Activated CD4-positive, alpha-beta memory T cell treated with anti-CD3 and anti-CD28 coated beads, Interleukin-2, amount 10 ng/mL, durations not matched to agents 7 days and 5 days (primary cell): ENCODE measurements at regions of chr17 and their contacts with region 1.

Region 1: DNA sequence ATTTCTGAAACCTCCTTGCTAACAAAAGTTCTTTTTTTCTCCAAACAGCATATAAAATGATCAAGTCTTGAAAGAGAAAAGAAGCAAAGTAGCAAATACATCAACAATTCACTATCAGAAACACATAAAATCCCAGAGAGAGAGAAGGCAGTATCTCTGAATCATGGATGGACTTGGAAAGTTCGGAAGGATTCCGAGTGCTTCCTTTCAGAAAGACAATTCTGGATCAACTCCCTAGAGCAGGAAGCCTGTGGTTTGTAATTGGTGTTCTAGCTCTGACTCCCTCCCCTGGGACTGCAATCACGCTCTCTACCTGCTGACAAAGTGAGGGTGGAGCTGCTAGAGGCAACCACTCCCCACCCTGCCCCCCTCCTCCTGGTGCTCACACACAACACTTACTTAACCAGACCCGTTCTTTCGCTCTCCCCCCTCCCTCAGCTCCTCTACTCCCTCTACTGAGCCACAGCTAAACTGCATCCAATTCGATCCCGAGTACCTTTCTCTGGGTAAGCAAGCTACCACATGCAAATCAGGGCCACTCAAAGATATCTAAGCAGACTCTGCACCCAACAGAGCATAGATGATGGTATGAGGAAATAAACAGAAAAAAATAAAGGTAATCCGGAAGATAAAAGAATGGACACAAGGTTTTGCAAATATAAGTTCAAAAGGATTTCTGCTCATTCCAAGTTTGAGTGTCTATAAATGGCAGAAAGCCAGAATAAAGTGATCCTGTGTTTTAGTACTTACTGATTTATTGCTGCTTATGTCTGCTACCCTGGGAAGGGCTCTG is at the start of gene RNF43:
- DNase-seq: peak; percentile 86
- H3K4me3 Mint-ChIP-seq: peak within 1 kb of the TSS; percentile 8
- H3K27ac Mint-ChIP-seq: peak within 1 kb of the TSS; percentile 10
- H3K4me1 Mint-ChIP-seq: peaks cover 31% of the 10 kb centered on the region
- H3K27me3 Mint-ChIP-seq: no peaks in the 10 kb centered on the region
- total RNA-seq, gene RNF43: not detected

Region 2: DNA sequence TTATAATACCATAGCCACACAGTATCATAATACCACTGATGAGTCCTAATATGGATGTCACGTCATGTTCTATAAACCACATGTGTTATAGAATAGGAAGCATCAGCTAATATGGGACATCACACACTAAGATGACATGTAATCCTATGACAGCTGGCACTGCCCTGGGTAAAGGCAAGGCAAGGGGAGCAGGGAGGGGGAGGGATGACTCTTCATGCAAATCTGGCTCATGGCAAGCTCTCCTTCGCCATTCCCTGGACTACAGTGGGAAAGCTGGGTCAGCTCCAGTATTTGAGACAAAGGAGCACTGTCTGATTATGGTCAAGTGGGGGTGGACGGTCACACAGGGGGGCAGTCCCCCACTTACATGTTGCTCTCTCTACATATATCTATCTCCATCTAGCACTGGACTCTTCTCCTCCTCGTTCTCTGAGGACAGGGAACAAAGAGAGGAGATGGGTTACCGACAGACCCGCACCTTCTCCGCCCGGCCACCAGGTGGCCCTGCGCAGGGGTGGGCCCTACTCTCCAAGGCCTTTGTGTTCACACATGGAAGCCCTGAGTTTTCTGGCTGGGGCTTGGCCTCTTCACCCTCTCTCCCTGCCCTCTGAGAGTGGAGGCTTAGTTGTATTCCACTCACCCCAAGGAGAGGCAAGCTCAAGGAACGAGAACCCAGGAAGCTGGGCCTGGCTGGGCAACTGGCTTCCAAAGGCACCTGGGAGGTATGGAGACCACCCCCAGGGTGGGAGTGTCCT is 113.3 kb before region 1 on chr17:
- CTCF ChIA-PET with region 1: interaction called, 16 read pairs
- POLR2A ChIA-PET with region 1: interaction called, 8 read pairs
- DNase-seq: peak; percentile 69
- H3K4me3 Mint-ChIP-seq: no peak overlapping the region
- H3K27ac Mint-ChIP-seq: no peak overlapping the region
- H3K4me1 Mint-ChIP-seq: no peaks in the 10 kb centered on the region
- H3K27me3 Mint-ChIP-seq: peaks cover 4% of the 10 kb centered on the region

Region 3: DNA sequence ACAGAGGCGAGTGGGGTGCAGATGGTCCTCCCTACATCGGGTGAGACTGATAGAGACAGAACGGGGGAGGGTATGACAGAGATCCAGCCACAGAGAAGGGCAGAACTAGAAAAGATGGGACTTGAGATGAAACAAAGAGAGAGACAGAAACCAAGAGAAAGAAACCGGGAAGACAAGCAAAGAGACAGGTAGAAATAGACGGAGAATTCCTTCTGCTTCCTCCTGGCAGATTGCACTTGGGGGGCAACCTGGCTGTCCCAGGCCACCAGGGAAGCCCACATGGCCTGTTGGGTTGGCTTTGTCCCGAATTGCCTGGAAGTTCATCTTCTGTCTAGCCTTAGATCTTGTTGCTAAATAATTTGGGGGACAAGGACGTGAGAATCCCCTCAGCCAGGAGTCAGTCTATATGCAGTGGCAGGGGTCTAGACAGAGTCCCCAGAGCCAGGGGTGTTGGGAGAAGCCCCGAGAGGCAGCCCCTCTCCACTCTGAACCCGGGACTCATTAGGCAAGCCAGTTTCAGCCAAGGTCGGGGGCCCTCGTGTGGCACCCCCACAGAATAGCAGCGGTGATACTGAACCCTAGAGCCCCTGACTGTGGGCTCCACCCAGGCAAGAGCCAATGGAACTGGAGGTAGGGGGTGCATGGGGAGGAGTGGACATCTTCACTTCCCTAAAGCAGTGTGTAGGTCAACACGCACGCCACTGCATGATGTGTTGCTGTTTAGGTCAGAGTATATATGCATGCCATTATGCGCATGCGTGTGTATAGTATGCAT is 88.3 kb before region 1 on chr17:
- CTCF ChIA-PET with region 1: interaction called, 7 read pairs
- POLR2A ChIA-PET with region 1: interaction called, 22 read pairs
- DNase-seq: peak; percentile 85
- H3K4me3 Mint-ChIP-seq: peak overlapping the region; percentile 98
- H3K27ac Mint-ChIP-seq: peak overlapping the region; percentile 99
- H3K4me1 Mint-ChIP-seq: peaks cover 37% of the 10 kb centered on the region
- H3K27me3 Mint-ChIP-seq: peaks cover 2% of the 10 kb centered on the region

Region 4: DNA sequence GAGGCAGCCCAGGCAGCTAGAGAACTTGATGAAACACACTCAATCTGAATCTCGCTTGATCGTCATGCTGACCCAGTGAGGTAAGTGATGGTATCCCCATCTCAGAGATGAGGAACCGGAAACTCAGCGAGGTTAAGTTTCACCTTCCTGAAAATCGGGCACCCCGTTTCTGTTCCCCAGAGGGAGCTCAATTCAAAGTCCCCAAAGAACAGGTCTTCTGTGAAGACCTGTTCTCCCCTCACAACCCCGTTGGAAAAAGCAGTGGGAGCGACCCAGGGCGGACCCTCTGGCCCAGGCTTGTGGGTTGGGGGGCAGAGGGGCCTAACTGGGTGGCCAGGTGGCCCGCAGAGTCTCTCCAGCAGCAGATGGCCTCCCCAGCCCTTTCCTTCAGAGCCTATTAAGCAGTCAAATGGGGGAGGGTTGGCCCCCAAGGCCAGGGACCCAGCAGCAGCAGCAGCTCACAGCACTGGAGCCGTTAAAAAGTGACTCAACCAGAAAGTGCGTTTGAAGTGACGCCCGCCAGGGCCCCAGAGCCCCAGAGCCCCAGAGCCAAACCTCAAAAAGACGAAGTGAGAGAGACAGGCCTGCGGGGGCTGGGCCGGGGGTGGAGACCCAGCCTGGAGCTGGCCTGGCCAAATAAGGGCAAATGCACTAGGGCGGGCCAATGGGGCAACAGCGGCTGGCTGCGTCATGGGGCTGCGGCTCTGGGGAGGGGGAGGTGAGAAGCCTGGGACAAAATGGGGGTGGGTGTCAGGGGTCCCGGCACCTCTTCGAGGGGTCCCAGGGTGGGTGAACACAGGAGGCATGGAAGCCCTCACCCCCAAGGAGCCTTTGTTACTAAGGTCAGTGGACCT is 79.7 kb before region 1 on chr17:
- CTCF ChIA-PET with region 1: interaction called, 7 read pairs
- POLR2A ChIA-PET with region 1: interaction called, 81 read pairs
- DNase-seq: peak; percentile 96
- H3K4me3 Mint-ChIP-seq: peak overlapping the region; percentile 98
- H3K27ac Mint-ChIP-seq: peak overlapping the region; percentile 100
- H3K4me1 Mint-ChIP-seq: peaks cover 52% of the 10 kb centered on the region
- H3K27me3 Mint-ChIP-seq: no peaks in the 10 kb centered on the region

Region 5: GRCh38 chr17:58344047-58344790 is 73.3 kb before region 1 on chr17:
- CTCF ChIA-PET with region 1: interaction called, 38 read pairs
- POLR2A ChIA-PET with region 1: interaction called, 81 read pairs
- DNase-seq: peak; percentile 92
- H3K4me3 Mint-ChIP-seq: peak overlapping the region; percentile 98
- H3K27ac Mint-ChIP-seq: peak overlapping the region; percentile 100
- H3K4me1 Mint-ChIP-seq: peaks cover 85% of the 10 kb centered on the region
- H3K27me3 Mint-ChIP-seq: no peaks in the 10 kb centered on the region

Region 6: DNA sequence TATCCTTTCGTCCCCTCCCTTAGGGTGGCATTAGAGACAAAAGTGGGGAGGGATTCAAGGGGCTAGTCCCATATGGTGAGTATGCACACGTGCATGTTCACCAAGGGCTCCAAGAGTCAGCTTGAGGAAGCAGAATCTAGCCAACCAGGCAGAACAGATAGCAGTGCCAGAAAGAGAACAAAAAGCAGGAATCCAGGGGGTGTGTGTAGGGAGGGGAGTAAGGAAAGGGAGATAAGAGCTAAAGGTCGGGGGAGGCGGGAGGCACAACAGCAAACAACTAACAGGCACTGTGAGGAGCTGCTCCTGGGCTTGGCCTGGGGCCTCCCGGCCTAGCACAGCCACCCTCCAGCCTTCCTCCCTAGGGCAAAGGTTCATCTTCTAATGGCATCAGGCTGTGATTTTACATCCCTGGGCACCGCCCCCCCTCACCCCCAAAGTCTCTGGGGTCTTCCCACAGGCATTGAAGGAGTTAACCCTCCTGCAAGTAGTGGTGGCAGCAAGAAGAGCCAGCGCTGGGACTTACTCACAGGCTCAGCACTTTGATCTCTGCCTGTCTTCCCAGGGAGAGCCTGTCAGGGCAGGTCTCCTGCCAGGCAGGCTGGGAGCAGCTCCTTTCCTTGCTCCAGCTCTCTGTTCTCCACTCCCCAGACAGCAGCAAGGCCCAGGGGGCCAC is 53.1 kb before region 1 on chr17:
- CTCF ChIA-PET with region 1: interaction called, 15 read pairs
- POLR2A ChIA-PET with region 1: interaction called, 3 read pairs
- DNase-seq: no peak
- H3K4me3 Mint-ChIP-seq: no peak overlapping the region
- H3K27ac Mint-ChIP-seq: no peak overlapping the region
- H3K4me1 Mint-ChIP-seq: peaks cover under 1% of the 10 kb centered on the region
- H3K27me3 Mint-ChIP-seq: no peaks in the 10 kb centered on the region

Region 7: GRCh38 chr17:58427807-58428206 is 10.3 kb after region 1 on chr17:
- CTCF ChIA-PET with region 1: interaction called, 20 read pairs
- POLR2A ChIA-PET with region 1: no interaction called
- DNase-seq: no peak
- H3K4me3 Mint-ChIP-seq: no peak overlapping the region
- H3K27ac Mint-ChIP-seq: no peak overlapping the region
- H3K4me1 Mint-ChIP-seq: no peaks in the 10 kb centered on the region
- H3K27me3 Mint-ChIP-seq: no peaks in the 10 kb centered on the region